GM12878 (cell line): ENCODE measurements at regions of chr14 and their contacts with region 1.

Region 1: DNA sequence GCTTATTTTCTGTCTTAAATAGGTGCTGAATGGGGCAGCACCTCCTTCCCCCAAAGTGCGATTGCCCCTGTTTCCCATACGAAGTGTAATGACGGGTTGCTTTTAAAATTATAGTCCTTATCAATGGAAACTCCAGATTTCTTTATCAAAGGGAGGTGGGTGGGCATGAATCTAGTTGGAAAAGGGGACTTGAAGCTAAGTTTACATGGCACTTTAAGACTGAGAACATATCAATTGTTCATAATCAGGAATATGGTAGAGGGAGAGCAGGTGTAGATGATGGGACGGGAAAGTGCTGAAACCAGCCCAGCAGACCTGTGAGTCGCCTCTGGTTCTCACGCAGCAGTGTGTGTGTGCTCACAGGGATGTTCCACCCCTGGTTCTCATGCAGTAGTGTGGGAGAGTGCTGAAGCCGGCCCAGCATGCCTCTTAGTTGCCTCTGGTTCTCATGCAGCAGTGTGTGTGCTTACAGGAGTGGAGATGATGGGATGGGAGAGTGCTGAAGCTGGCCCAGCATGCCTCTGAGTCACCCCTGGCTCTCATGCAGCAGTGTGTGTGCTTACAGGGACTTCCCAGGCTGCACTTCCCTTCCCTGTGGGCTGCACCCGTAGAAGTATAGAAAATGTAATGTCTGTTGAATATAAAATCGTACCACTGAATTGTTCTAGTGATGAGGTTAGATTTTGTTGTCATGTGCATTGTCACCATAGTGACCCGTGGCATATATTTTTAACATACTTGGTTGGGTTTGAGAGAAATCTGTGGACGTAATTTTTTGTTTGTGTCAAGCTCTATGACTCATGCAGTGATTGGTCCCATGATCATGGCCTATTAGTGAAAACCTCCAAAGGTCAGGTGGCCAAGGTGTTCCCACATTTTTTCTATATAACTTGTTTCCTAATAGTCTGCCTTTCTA is 51.6 kb downstream of the GPATCH2L start:
- DNase-seq: peak; percentile 95
- ATAC-seq: peak; percentile 87
- H3K4me3 ChIP-seq: no peak overlapping the region
- H3K27ac ChIP-seq: peak overlapping the region; percentile 94
- H3K4me1 ChIP-seq: peaks cover 51% of the 10 kb centered on the region
- H3K27me3 ChIP-seq: no peaks in the 10 kb centered on the region
- CTCF ChIP-seq: no peak
- EP300 ChIP-seq: peak; percentile 63 to 71; a peak in 3 of 4 replicates
- POLR2A ChIP-seq: peak; percentile 75
- RAD21 ChIP-seq: peak; percentile 27

Region 2: DNA sequence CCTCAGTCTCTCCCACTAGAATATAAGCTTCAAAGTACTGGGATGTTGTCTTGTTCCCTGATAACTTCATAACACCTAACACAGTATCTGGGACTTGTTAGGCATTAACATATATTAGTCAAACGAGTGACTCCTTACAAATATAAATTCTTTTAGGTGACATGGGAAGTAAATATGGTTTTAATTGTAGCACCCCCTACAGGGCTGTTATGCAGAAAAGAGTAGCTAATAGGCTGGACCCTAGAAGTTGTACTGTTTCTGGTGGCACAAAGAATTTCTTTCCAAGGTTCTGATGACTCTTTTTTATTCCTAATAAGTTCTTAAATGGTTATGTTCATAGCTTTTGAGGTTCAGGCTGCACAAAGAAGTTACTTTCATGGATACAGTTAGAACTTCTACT is 21.8 kb before region 1 on chr14:
- CTCF ChIA-PET with region 1: interaction called, 13 read pairs
- POLR2A ChIA-PET with region 1: interaction called, 15 read pairs
- RAD21 ChIA-PET with region 1: interaction called, 229 read pairs
- SMC1A ChIA-PET with region 1: interaction called, 71 read pairs
- in situ Hi-C with region 1: no loop called
- intact Hi-C with region 1: no loop called
- DNase-seq: no peak
- ATAC-seq: no peak
- H3K4me3 ChIP-seq: no peak overlapping the region
- H3K27ac ChIP-seq: no peak overlapping the region
- H3K4me1 ChIP-seq: peaks cover 17% of the 10 kb centered on the region
- H3K27me3 ChIP-seq: no peaks in the 10 kb centered on the region
- CTCF ChIP-seq: peak; percentile 11 to 25 (median 16); a peak in 1 of 6 replicates
- EP300 ChIP-seq: no peak
- POLR2A ChIP-seq: no peak
- RAD21 ChIP-seq: 0 out of 2 replicates have a peak, but pooled peaks have one; percentile 7

Region 3: DNA sequence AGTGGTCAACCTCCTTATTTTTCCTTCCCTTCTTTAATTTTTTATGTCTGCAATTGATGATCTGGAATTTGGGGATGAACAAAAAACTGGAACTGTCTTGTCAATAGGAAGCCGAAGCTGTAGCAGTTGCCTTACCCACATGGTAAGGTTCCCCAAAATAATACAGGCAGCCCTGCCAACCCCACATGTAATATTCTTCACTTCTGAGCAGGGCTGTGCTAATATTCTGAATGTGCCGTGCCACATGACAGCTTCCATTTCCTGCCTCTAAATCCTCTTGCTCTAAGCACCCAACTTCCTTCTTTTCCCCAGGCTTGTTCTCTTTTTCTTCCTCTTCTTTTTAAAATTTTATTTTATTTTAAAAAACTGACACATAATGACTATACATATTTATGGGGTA is 12.0 kb before region 1 on chr14:
- CTCF ChIA-PET with region 1: interaction called, 34 read pairs
- POLR2A ChIA-PET with region 1: interaction called, 85 read pairs
- RAD21 ChIA-PET with region 1: interaction called, 229 read pairs
- SMC1A ChIA-PET with region 1: interaction called, 148 read pairs
- in situ Hi-C with region 1: no loop called
- intact Hi-C with region 1: loop called (anchors 1 kb)
- DNase-seq: no peak
- ATAC-seq: peak; percentile 48
- H3K4me3 ChIP-seq: no peak overlapping the region
- H3K27ac ChIP-seq: peak overlapping the region; percentile 99
- H3K4me1 ChIP-seq: peaks cover 48% of the 10 kb centered on the region
- H3K27me3 ChIP-seq: no peaks in the 10 kb centered on the region
- CTCF ChIP-seq: no peak
- EP300 ChIP-seq: no peak
- POLR2A ChIP-seq: no peak
- RAD21 ChIP-seq: no peak

Region 4: GRCh38 chr14:76236172-76237130 is 33.1 kb after region 1 on chr14:
- CTCF ChIA-PET with region 1: no interaction called
- POLR2A ChIA-PET with region 1: interaction called, 3 read pairs
- RAD21 ChIA-PET with region 1: interaction called, 20 read pairs
- SMC1A ChIA-PET with region 1: interaction called, 16 read pairs
- in situ Hi-C with region 1: no loop called
- intact Hi-C with region 1: loop called (anchors 5 kb)
- DNase-seq: peak; percentile 63
- ATAC-seq: peak; percentile 96
- H3K4me3 ChIP-seq: no peak overlapping the region
- H3K27ac ChIP-seq: peak overlapping the region; percentile 7; the same call in 1 of the 2 replicates
- H3K4me1 ChIP-seq: peaks cover 16% of the 10 kb centered on the region
- H3K27me3 ChIP-seq: no peaks in the 10 kb centered on the region
- CTCF ChIP-seq: no peak
- EP300 ChIP-seq: peak; percentile 61 to 79; a peak in 3 of 4 replicates
- POLR2A ChIP-seq: no peak
- RAD21 ChIP-seq: no peak